Body of pancreas (tissue), 4 donors: ENCODE measurements at regions of chr12 and their contacts with region 1.

Region 1: DNA sequence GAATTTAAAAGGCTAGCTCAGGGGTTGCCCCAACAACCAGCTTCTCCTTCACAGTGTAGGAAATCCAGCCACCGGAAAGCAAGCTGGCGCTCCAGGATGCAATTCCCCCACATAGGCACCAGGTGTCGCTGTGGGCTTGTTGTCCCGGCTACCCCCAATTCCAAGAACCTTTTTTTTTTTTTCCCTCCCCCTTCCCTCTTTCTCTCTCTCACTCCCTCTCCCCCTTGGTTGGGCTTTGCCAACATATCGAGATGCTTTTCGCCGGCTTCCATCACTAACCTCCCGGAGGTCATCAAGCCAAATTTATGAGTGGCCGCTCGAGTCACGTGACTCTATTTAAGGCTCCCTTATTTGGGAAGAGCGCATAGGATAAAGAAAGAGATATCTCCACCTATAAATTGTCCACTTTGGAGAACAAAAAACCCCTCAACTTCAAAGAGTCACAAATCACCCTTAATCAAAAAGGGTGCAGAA is at the start of gene HOXC5:
- DNase-seq: peak; percentile 63 to 73 (median 67)
- ATAC-seq: peak; percentile 61
- H3K4me3 ChIP-seq: no peak within 1 kb of the TSS
- H3K27ac ChIP-seq: no peak within 1 kb of the TSS
- H3K4me1 ChIP-seq: peaks cover 37% of the 10 kb centered on the region
- H3K27me3 ChIP-seq: peaks cover 4 to 48% of the 10 kb centered on the region in 2 donors
- CTCF ChIP-seq: peak; percentile 75 to 97 (median 79)
- POLR2A ChIP-seq: no peak
- total RNA-seq, gene HOXC5: not detected

Region 2: DNA sequence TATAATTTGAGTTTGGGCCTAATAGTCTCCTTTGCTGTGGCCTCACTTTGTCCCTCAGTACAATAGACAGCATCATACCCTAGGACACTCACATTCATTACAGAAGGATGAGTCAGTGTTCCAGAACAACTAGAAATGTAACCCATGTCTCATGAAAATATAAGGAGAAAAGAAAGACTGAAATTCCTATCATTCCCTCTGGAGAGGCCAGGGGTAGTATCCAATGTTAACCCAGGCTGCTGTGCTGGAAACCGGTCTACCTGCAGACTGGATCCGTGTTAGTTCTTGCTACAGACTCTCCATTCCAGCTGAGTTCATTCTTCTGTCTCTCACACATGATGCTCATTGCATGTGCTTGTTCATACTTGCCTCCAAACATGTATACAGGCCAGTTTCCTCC is 169.8 kb before region 1 on chr12:
- intact Hi-C with region 1: no loop called
- DNase-seq: no peak
- ATAC-seq: no peak
- H3K4me3 ChIP-seq: no peak overlapping the region
- H3K27ac ChIP-seq: no peak overlapping the region
- H3K4me1 ChIP-seq: no peaks in the 10 kb centered on the region
- H3K27me3 ChIP-seq: no peaks in the 10 kb centered on the region
- CTCF ChIP-seq: no peak
- POLR2A ChIP-seq: no peak

Region 3: GRCh38 chr12:54191550-54192022 is 158.9 kb after region 1 on chr12:
- intact Hi-C with region 1: loop called (anchors 5 kb)
- DNase-seq: peak; percentile 85 to 88 (median 87)
- ATAC-seq: peak; percentile 70
- H3K4me3 ChIP-seq: no peak overlapping the region
- H3K27ac ChIP-seq: no peak overlapping the region
- H3K4me1 ChIP-seq: peaks cover 22% of the 10 kb centered on the region
- H3K27me3 ChIP-seq: no peaks in the 10 kb centered on the region
- CTCF ChIP-seq: peak; percentile 50 to 96 (median 78)
- POLR2A ChIP-seq: peak in 1 of 3 donors; percentile 7